ENCODE measurements at regions of chr4 and their contacts with region 1.

Region 1: DNA sequence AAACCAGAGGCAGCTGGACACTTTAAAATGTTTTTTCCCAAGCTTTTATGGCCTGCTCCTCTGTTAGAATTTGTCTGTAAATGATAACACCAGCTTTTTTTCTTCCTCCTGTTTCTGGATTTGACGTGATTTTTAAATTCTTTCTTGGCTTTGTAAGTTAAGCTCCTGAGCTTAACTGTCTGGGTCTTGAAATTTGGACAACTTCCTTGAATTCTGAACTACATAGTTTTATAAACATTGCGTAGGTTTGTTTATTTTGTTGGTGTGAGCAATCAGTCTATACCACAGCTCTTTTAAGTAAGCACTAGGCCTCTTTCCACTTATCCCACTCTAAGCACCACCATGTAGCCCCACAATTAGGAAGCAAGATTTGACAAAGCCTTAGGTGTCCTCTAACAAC is 144.4 kb upstream of the GUCY1A1 start:
- DNase-seq: no peak
- H3K4me3 ChIP-seq: no peak overlapping the region
- H3K27ac ChIP-seq: peak overlapping the region in 1 of 2 donors; percentile 35
- H3K4me1 ChIP-seq: peaks cover 0 to 8% of the 10 kb centered on the region in 2 donors
- H3K27me3 ChIP-seq: no peaks in the 10 kb centered on the region
- CTCF ChIP-seq: no peak

Region 2: DNA sequence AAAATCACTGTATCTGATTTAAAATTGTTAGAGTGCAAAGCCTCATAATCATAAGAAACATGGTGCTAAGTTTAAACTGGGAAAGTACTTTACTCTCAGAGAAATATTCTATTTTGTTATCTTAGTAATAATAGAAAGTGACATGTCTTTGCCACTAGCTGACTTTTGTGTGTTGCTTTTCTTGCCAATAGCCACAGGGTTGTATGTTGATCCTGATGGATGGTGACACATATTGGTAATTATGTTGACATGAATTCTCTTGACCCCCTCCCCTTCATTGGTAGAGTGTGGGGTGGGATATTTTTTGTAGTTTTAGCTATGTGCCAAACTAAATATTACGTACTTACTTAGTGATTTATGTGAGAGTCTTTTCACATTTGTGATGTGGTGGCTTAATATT is 42.4 kb before region 1 on chr4:
- intact Hi-C with region 1: loop called (anchors 5 kb)
- DNase-seq: no peak
- H3K4me3 ChIP-seq: no peak overlapping the region
- H3K27ac ChIP-seq: peak overlapping the region; percentile 31 to 46
- H3K4me1 ChIP-seq: peaks cover 5 to 17% of the 10 kb centered on the region in 2 donors
- H3K27me3 ChIP-seq: no peaks in the 10 kb centered on the region
- CTCF ChIP-seq: no peak

Measured in ascending aorta (tissue), 2 donors.